ENCODE measurements at regions of chr1 and their contacts with region 1.

Region 1: DNA sequence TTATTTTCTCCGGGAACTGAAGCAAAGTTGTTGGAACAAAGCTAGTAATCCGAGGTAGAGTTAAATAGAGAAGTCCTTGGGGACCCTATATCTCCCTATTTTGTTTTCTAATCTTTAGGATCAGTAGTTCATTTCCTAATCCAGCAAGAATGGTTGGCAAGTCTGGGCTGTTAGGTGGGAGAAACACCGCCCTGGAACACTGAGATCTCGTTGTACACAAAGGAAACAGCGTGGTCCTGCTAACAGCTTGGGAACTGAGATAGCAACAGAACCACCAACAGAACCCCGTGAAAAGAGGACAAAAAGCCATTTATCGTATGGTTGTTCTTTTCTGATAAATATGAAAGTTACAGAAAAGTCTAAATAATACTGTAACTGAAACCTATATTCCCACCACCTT is 121.9 kb upstream of the CDC42BPA start:
- DNase-seq: no peak
- H3K4me3 ChIP-seq: no peak overlapping the region
- H3K27ac ChIP-seq: no peak overlapping the region
- H3K4me1 ChIP-seq: peaks cover 4% of the 10 kb centered on the region
- H3K27me3 ChIP-seq: no peaks in the 10 kb centered on the region
- CTCF ChIP-seq: no peak
- POLR2A ChIP-seq: no peak

Region 2: DNA sequence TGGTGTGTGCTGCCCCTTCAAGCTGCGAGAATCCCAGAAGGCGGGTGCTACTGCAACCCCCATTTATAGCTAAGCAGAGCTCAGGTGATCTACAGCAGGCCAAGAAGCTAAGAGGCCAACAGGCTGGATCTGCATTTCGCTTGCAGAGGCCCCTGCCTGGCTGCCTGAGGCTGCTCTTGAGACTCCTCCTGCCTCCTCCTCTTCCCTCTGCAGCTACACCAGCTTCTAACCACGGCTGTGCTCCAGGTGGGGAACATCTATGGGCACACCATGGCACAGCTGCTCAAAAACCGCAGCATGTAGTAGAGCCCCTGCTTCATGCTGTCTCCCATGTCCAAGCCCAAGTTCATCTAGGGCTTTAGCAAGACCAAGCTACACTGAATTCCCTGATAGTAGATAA is 50.3 kb after region 1 on chr1:
- intact Hi-C with region 1: no loop called
- DNase-seq: peak in 1 of 2 donors; percentile 83
- H3K4me3 ChIP-seq: no peak overlapping the region
- H3K27ac ChIP-seq: no peak overlapping the region
- H3K4me1 ChIP-seq: no peaks in the 10 kb centered on the region
- H3K27me3 ChIP-seq: no peaks in the 10 kb centered on the region
- CTCF ChIP-seq: no peak
- POLR2A ChIP-seq: no peak

Region 3: DNA sequence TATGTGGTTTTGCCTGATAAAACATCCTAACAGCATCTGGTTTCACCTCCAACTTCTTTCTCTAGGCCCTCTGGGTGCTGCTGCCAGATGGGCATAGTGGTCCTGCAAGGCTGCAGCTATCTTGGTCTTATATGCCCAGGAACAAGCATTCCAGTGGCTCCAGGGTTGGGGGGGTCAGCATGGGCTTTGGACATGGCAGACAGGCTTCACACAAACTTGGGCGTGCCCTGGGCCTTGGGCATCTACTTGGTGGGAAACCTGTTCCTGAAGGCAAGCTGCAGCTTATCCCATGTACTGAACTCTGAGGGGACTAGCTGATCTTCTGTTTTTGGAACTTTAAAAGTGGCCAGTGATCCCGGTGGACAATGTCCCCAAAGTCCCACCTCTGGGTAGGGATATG is 68.2 kb after region 1 on chr1:
- intact Hi-C with region 1: no loop called
- DNase-seq: peak in 1 of 2 donors; percentile 76
- H3K4me3 ChIP-seq: no peak overlapping the region
- H3K27ac ChIP-seq: no peak overlapping the region
- H3K4me1 ChIP-seq: no peaks in the 10 kb centered on the region
- H3K27me3 ChIP-seq: no peaks in the 10 kb centered on the region
- CTCF ChIP-seq: no peak
- POLR2A ChIP-seq: no peak

Region 4: DNA sequence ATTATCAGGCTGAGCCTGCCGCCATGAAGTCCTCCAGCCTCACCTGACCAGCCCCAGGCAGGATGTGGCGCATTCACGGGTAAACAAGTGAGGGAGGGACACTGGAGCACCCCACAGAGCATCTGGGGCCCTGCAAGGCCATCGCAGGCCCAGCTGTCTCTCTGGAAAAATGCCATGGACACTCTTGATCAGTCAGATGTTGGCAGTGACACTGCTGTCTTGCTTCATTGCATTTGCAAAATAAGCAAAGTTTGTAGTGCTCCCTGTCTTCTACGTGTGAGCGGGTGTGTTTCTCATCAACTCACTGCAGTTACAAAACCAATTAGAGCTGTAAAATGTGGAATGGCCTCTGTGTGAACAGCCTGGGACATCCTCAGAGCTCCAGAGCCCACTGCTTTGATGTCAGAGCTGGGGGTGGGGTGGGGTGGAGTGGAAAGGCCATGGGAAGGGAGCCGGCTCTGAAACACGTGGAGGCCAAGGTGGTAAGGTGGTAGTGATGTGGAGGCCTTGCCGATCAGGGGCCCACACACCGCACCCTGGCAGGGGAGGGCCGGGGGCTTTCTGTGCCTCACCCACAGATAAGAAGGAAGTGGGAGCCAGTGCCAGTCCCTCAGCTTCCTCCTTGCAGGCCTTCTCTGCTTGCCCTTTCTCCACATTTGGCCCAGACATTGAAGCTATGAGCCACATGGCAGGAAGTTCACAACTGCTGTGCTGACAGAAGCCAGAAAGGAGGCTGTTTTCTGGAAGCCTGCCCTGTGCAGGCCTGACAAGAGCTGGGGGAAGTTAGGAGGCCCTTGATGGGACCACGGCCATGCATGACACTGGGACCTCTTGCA is 1550.0 kb after region 1 on chr1:
- intact Hi-C with region 1: loop called (anchors 5 kb)
- DNase-seq: peak; percentile 79 to 88
- H3K4me3 ChIP-seq: no peak overlapping the region
- H3K27ac ChIP-seq: peak overlapping the region; percentile 51
- H3K4me1 ChIP-seq: peaks cover 15% of the 10 kb centered on the region
- H3K27me3 ChIP-seq: no peaks in the 10 kb centered on the region
- CTCF ChIP-seq: no peak
- POLR2A ChIP-seq: no peak